ENCODE measurements at regions of chr9 and their contacts with region 1.

Region 1: GRCh38 chr9:95305770-95306492 is 11.6 kb downstream of the FANCC start:
- DNase-seq: peak in 1 of 2 experiments; percentile 60
- H3K4me3 ChIP-seq: 0 out of 2 replicates have a peak overlapping the region, but pooled peaks have one; percentile 14
- H3K27ac ChIP-seq: peak overlapping the region; percentile 43
- H3K4me1 ChIP-seq: peaks cover 14% of the 10 kb centered on the region
- H3K27me3 ChIP-seq: no peaks in the 10 kb centered on the region
- CTCF ChIP-seq: no peak

Region 2: GRCh38 chr9:95268681-95269080 is 37.2 kb before region 1 on chr9:
- CTCF ChIA-PET with region 1: no interaction called
- POLR2A ChIA-PET with region 1: no interaction called
- intact Hi-C with region 1: loop called (anchors 5 kb)
- DNase-seq: no peak
- H3K4me3 ChIP-seq: no peak overlapping the region
- H3K27ac ChIP-seq: no peak overlapping the region
- H3K4me1 ChIP-seq: no peaks in the 10 kb centered on the region
- H3K27me3 ChIP-seq: no peaks in the 10 kb centered on the region
- CTCF ChIP-seq: no peak

Region 3: DNA sequence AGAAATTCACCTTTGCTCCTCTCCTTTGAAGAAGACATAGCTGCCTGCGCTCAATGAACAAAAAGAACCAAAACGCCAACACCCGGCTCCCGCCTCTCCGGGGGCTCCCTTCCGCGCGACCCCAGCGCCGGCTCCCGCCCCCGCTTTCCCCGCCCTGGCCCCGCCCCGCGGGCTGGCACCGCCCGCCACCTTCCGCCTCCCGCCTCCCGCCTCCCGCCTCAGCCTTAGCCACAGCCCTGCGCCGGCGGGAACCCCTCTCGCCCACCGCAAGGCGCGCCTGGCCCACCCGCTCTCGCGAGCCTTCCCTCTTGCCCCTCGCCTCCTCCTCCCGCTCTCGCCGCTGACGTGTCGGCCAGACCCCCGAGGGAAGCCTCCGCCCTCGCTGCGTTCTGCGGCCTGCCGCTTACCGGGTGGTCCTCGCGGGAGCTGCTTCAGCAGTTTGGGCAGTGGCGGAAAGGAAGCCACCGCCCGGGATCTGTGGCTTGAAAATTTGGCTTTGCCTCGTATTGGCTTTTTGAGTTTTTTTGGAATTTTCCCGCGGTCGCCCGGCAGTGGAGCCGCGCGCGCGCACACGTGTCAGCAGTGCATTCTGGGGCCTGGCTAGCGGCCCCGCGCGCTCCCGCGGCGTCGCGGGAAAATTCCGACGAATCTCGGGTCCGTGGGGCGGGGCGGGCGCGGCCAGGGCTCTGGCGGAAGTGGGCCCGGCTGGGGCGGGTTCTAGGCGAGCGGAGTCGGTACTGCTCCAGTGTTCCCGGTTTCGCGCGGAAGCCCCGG is 11.4 kb after region 1 on chr9 and contains the start of gene FANCC:
- CTCF ChIA-PET with region 1: no interaction called
- POLR2A ChIA-PET with region 1: no interaction called
- intact Hi-C with region 1: no loop called
- DNase-seq: peak; percentile 73 to 91
- H3K4me3 ChIP-seq: peak within 1 kb of the TSS; percentile 80
- H3K27ac ChIP-seq: peak within 1 kb of the TSS; percentile 97
- H3K4me1 ChIP-seq: peaks cover 37% of the 10 kb centered on the region
- H3K27me3 ChIP-seq: no peaks in the 10 kb centered on the region
- CTCF ChIP-seq: no peak
- total RNA-seq, gene FANCC: 31.5 and 44.7 TPM in 2 replicates

Region 4: DNA sequence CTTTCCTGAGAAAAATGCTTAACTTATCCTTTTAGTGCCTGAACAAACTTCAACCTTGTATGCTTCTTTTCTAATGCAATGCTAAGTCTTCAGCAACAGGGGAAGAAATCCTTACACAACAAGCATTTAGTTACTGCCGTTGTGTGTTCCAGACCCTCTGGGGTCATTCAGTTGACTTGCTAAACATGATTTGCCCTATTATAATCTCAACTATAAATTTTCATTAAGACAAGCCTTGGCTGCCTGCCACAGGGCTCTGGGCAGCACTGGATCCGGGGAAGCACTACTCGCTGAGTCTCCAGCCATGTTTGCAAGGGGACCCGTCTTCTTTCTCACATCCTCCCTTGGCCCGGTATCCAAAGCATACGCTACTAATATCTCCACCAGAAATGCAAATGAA is 152.7 kb after region 1 on chr9:
- CTCF ChIA-PET with region 1: no interaction called
- POLR2A ChIA-PET with region 1: no interaction called
- intact Hi-C with region 1: no loop called
- DNase-seq: no peak
- H3K4me3 ChIP-seq: no peak overlapping the region
- H3K27ac ChIP-seq: no peak overlapping the region
- H3K4me1 ChIP-seq: no peaks in the 10 kb centered on the region
- H3K27me3 ChIP-seq: no peaks in the 10 kb centered on the region
- CTCF ChIP-seq: no peak

Region 5: DNA sequence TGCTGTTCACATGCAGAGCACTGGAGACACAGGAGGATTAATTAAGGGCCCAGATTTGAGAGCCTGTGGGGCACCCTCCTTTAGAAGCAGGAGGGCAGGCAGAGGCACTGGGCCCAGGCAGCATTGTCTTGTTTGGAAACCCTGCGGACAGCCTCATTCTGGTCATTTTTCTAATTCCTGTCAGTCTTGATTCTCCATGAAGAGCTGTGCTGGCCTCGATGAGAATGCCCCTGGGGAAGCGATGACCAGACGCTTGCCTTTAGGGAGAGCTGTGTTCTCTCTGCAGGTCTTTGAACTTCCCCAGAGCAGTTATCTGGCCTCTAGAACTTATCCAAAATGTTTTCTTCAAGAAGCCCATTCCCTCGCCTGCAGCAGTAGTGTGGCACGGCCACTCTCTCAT is 328.6 kb after region 1 on chr9:
- CTCF ChIA-PET with region 1: no interaction called
- POLR2A ChIA-PET with region 1: no interaction called
- intact Hi-C with region 1: no loop called
- DNase-seq: no peak
- H3K4me3 ChIP-seq: no peak overlapping the region
- H3K27ac ChIP-seq: no peak overlapping the region
- H3K4me1 ChIP-seq: no peaks in the 10 kb centered on the region
- H3K27me3 ChIP-seq: peaks cover 88% of the 10 kb centered on the region
- CTCF ChIP-seq: no peak

Measured in PC-9 (cell line).